ENCODE measurements at regions of chr17 and their contacts with region 1.

Region 1: DNA sequence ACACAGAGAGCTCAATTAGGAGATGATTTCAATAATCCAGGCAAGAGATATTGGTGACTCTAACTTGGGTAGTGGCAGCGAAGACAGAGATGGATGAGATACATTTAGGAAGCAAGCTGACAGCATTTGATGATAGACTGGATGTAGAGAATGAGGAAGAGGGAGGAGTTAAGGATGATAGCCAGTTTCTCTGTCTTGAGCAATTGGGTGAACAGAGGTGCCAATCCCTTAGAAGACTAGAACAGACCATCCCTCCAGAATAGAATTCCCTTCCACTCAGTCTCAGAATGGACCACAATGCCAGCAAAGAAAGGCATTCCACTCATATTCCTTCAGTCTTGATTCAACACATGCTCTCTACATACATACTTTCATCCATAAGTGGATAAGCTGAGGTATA is 17.2 kb downstream of the POLG2 start:
- DNase-seq: no peak
- H3K4me3 ChIP-seq: no peak overlapping the region
- H3K27ac ChIP-seq: no peak overlapping the region
- H3K4me1 ChIP-seq: no peaks in the 10 kb centered on the region
- H3K27me3 ChIP-seq: no peaks in the 10 kb centered on the region

Region 2: GRCh38 chr17:64306850-64307463 is 172.7 kb before region 1 on chr17:
- in situ Hi-C with region 1: loop called (anchors 10 kb)
- DNase-seq: peak; percentile 78
- H3K4me3 ChIP-seq: no peak overlapping the region
- H3K27ac ChIP-seq: no peak overlapping the region
- H3K4me1 ChIP-seq: no peaks in the 10 kb centered on the region
- H3K27me3 ChIP-seq: no peaks in the 10 kb centered on the region

Region 3: DNA sequence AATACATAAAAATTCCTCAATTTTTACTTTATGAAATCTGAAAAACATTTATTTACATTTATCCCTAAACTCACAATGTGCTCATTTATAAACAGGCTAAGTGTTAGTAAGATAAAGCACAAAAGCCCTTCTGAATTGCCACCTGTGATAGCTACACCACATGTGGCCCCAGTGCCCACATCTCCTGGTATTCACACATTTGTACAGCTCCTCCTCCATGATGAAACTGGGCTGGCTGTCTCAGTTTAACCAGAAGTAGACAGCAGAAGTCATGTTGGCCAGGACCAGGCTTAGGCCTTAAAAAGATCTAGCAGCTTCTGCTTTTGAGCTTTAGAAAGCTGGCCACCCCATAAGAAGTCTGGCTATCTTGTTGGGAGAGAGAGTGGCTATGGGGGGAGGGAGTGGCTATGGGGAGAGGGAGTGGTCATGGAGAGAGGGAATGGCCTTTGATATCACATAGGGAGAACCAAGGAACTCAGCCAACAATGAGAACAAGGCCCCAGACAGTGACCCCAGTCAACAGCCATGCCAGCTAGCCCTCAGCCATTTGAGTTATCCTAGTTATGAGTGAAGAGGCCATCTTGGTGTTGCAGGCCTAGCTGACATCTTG is 74.5 kb after region 1 on chr17:
- in situ Hi-C with region 1: no loop called
- DNase-seq: no peak
- H3K4me3 ChIP-seq: no peak overlapping the region
- H3K27ac ChIP-seq: 0 out of 2 replicates have a peak overlapping the region, but pooled peaks have one; percentile 13
- H3K4me1 ChIP-seq: no peaks in the 10 kb centered on the region
- H3K27me3 ChIP-seq: no peaks in the 10 kb centered on the region

Region 4: DNA sequence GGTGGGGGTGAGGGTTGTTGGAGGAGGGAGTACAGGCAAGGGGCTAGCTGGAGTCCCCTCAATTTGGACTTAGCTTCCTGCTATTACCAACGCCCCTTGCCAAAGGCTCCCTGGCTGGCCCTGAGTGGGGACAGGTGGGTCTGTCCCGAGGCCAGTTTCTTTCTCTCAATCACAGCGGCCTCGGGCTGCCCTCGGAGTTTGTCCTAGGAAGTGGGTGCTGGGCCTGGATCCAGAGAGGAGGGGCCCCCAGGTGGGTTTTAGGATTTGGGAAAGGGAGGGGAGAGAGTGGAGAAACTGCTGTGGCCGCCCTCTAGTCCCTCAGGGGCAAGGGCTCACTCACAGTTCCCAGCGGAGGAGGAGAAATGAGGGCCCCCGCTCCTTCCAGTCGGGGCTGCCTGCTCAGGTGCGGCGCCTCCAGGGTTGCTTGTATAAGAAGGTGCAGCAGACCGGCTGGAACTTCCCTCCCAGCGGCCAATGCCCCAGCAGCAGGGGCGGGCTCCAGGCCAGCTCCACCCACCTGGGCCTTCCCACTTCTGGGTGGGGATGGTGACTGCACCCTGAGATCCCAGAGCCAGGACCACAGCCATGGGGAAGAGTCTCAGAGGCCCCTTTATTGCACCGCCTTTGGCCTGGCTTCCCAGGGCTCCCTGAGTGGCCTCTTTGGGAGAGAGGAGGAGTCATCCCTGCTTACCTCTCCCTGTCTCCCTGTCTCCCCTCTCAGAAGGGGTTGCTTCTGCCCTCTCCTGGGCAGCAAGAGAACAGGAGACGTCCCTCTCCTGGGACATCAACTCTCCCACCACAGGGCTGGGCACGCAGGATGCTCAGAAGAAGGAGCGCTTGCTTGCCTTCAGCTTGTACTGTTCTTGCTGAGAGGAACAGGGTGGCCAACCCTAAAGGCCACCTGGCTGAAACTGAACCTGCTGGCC is 294.4 kb after region 1 on chr17:
- in situ Hi-C with region 1: no loop called
- DNase-seq: peak; percentile 60
- H3K4me3 ChIP-seq: no peak overlapping the region
- H3K27ac ChIP-seq: no peak overlapping the region
- H3K4me1 ChIP-seq: peaks cover 6% of the 10 kb centered on the region
- H3K27me3 ChIP-seq: peaks cover 4% of the 10 kb centered on the region